ENCODE measurements at regions of chr9 and their contacts with region 1.

Region 1: GRCh38 chr9:83972286-83972685 is 7.7 kb downstream of the HNRNPK start:
- DNase-seq: no peak
- ATAC-seq: peak; percentile 43
- H3K4me3 Mint-ChIP-seq: no peak overlapping the region
- H3K27ac Mint-ChIP-seq: peak overlapping the region; percentile 53
- H3K4me1 Mint-ChIP-seq: peaks cover 72% of the 10 kb centered on the region
- H3K27me3 Mint-ChIP-seq: no peaks in the 10 kb centered on the region
- CTCF ChIP-seq: no peak

Region 2: DNA sequence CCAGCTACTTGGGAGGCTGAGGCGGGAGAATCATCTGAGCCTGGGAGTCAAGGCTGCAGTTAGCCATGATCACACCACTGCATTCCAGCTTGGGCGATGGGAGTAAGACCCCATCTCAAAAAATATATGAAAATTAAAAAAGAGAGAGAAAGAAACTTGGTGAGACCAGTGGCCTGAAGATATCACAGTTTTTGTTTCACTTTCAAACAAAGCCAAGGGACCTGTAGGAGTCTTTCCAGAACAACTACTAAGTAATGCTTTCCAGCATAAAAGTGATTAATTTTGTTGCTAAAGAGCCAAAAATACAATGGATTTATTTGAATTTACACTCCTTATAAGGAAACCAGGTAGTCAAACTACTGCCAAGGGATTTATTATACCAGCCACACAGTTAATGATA is 178.2 kb before region 1 on chr9:
- CTCF ChIA-PET with region 1: no interaction called
- POLR2A ChIA-PET with region 1: no interaction called
- intact Hi-C with region 1: no loop called
- DNase-seq: no peak
- ATAC-seq: no peak
- H3K4me3 Mint-ChIP-seq: no peak overlapping the region
- H3K27ac Mint-ChIP-seq: no peak overlapping the region
- H3K4me1 Mint-ChIP-seq: peaks cover 3% of the 10 kb centered on the region
- H3K27me3 Mint-ChIP-seq: no peaks in the 10 kb centered on the region
- CTCF ChIP-seq: no peak

Region 3: GRCh38 chr9:83956434-83957247 is 15.6 kb before region 1 on chr9:
- CTCF ChIA-PET with region 1: no interaction called
- POLR2A ChIA-PET with region 1: interaction called, 224 read pairs
- intact Hi-C with region 1: no loop called
- DNase-seq: peak; percentile 76
- ATAC-seq: peak; percentile 81
- H3K4me3 Mint-ChIP-seq: peak overlapping the region; percentile 97
- H3K27ac Mint-ChIP-seq: peak overlapping the region; percentile 97
- H3K4me1 Mint-ChIP-seq: peaks cover 9% of the 10 kb centered on the region
- H3K27me3 Mint-ChIP-seq: no peaks in the 10 kb centered on the region
- CTCF ChIP-seq: no peak

Measured in activated CD8-positive, alpha-beta T cell treated with anti-CD3 and anti-CD28 coated beads for 36 hours (primary cell).